ENCODE measurements at regions of chr6 and their contacts with region 1.

Region 1: GRCh38 chr6:3356056-3356761 is 97.5 kb downstream of the PSMG4 start:
- DNase-seq: peak; percentile 71
- H3K4me3 Mint-ChIP-seq: peak overlapping the region; percentile 64
- H3K27ac Mint-ChIP-seq: peak overlapping the region; percentile 75
- H3K4me1 Mint-ChIP-seq: peaks cover 22% of the 10 kb centered on the region
- H3K27me3 Mint-ChIP-seq: no peaks in the 10 kb centered on the region

Region 2: GRCh38 chr6:3251462-3252314 is 104.5 kb before region 1 on chr6:
- CTCF ChIA-PET with region 1: no interaction called
- POLR2A ChIA-PET with region 1: no interaction called
- intact Hi-C with region 1: no loop called
- DNase-seq: peak; percentile 87
- H3K4me3 Mint-ChIP-seq: no peak overlapping the region
- H3K27ac Mint-ChIP-seq: no peak overlapping the region
- H3K4me1 Mint-ChIP-seq: peaks cover 4% of the 10 kb centered on the region
- H3K27me3 Mint-ChIP-seq: peaks cover 24% of the 10 kb centered on the region

Region 3: GRCh38 chr6:3341467-3341866 is 14.7 kb before region 1 on chr6:
- CTCF ChIA-PET with region 1: no interaction called
- POLR2A ChIA-PET with region 1: no interaction called
- intact Hi-C with region 1: loop called (anchors 2 kb)
- DNase-seq: no peak
- H3K4me3 Mint-ChIP-seq: no peak overlapping the region
- H3K27ac Mint-ChIP-seq: no peak overlapping the region
- H3K4me1 Mint-ChIP-seq: peaks cover 17% of the 10 kb centered on the region
- H3K27me3 Mint-ChIP-seq: no peaks in the 10 kb centered on the region

Region 4: GRCh38 chr6:3370361-3371219 is 14.4 kb after region 1 on chr6:
- CTCF ChIA-PET with region 1: no interaction called
- POLR2A ChIA-PET with region 1: no interaction called
- intact Hi-C with region 1: loop called (anchors 2 kb)
- DNase-seq: peak; percentile 15
- H3K4me3 Mint-ChIP-seq: no peak overlapping the region
- H3K27ac Mint-ChIP-seq: no peak overlapping the region
- H3K4me1 Mint-ChIP-seq: peaks cover 26% of the 10 kb centered on the region
- H3K27me3 Mint-ChIP-seq: no peaks in the 10 kb centered on the region

Region 5: GRCh38 chr6:3383525-3383924 is 27.3 kb after region 1 on chr6:
- CTCF ChIA-PET with region 1: no interaction called
- POLR2A ChIA-PET with region 1: no interaction called
- intact Hi-C with region 1: no loop called
- DNase-seq: no peak
- H3K4me3 Mint-ChIP-seq: no peak overlapping the region
- H3K27ac Mint-ChIP-seq: no peak overlapping the region
- H3K4me1 Mint-ChIP-seq: peaks cover 5% of the 10 kb centered on the region
- H3K27me3 Mint-ChIP-seq: no peaks in the 10 kb centered on the region

Region 6: GRCh38 chr6:3456755-3457466 is 100.7 kb after region 1 on chr6 and contains the start of gene SLC22A23:
- CTCF ChIA-PET with region 1: no interaction called
- POLR2A ChIA-PET with region 1: no interaction called
- intact Hi-C with region 1: loop called (anchors 5 kb)
- DNase-seq: peak; percentile 79
- H3K4me3 Mint-ChIP-seq: peak within 1 kb of the TSS; percentile 71
- H3K27ac Mint-ChIP-seq: no peak within 1 kb of the TSS
- H3K4me1 Mint-ChIP-seq: peaks cover 7% of the 10 kb centered on the region
- H3K27me3 Mint-ChIP-seq: peaks cover 7% of the 10 kb centered on the region
- total RNA-seq, gene SLC22A23: 0.90 to 1.0 TPM

Measured in activated CD4-positive, alpha-beta memory T cell treated with anti-CD3 and anti-CD28 coated beads for 36 hours (primary cell).